ENCODE measurements at regions of chr11 and their contacts with region 1.

Region 1: DNA sequence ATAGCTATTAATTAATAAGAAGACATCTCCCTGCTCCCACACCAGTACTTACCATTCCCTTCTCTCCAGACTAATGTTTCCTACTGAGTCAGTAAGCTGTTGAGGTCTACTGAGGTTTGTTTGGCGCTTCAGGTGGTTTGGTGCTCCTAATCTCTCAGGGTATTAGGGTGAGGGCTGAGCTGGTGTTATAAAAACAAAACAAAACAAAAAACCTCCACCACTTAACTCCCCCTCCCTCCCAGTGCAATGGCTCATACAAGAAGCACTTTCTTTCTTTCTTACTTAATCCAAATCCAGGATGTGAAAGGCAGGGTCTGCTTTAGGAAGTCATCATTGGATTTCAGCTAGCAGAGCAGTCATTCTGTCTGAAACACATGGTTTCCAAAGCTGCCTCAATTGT is 15.3 kb downstream of the CSTPP1 start:
- DNase-seq: no peak
- ATAC-seq: no peak
- H3K4me3 ChIP-seq: no peak overlapping the region
- H3K27ac ChIP-seq: no peak overlapping the region
- H3K4me1 ChIP-seq: peaks cover 31% of the 10 kb centered on the region
- H3K27me3 ChIP-seq: no peaks in the 10 kb centered on the region
- CTCF ChIP-seq: no peak

Region 2: DNA sequence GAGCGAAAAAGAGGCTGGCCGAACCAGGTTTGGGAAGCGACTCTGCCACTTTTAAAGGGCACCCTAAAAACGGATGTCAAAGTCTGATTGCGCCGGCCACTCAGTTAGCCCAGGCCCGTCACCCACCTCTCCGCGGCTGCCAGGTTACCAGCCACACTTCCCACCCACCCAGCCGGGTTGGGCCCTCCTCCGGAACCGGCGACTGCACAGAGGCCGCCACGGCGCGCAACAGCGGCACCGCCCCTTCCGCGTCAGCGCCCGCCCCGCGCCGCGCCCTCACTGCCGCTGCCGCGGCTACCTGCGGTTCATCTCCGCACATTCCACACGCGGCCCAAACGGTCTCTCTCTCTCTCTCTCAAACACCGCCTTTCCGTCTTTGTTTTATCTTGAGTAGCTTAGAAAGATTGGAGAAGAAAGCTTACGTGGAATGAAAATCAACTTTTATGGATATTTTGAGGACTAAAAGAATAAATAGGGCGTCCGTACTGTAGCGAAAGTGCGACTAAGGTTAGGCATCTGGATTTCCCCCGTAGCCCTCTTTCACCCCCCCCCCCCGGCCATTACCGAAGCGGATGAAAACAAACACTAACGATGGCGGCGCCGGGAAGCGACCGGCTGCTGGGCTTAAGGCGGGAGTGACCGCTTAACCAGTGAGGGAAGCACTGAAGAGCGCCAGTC is 334.7 kb before region 1 on chr11 and contains the starts of genes ATG13 and HARBI1:
- CTCF ChIA-PET with region 1: no interaction called
- POLR2A ChIA-PET with region 1: no interaction called
- intact Hi-C with region 1: no loop called
- DNase-seq: peak; percentile 86
- ATAC-seq: peak; percentile 96
- H3K4me3 ChIP-seq: peak within 1 kb of the TSS; percentile 97
- H3K27ac ChIP-seq: peak within 1 kb of the TSS; percentile 78
- H3K4me1 ChIP-seq: peaks cover 15% of the 10 kb centered on the region
- H3K27me3 ChIP-seq: no peaks in the 10 kb centered on the region
- CTCF ChIP-seq: no peak
- total RNA-seq, gene ATG13: 95.0 and 97.3 TPM in 2 replicates
- total RNA-seq, gene HARBI1: 1.7 and 6.5 TPM in 2 replicates

Region 3: DNA sequence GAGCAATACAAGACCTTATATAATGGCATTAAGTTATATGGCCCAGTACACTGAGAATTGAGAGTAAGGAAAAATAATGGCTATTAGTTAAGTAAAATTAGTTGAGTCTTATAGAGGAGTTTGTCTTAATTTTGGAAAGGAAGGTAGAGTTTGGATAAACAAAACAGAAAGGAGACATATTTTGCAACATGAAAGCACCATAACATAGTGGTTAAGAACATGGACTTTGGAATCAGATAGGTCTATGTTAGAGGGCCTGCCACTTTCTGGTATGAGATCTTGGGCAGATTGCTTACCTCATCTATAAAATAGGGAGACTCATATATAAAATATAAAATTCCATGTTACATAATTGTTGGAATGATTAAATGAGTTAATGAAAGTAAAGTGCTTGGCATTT is 53.6 kb after region 1 on chr11:
- CTCF ChIA-PET with region 1: no interaction called
- POLR2A ChIA-PET with region 1: interaction called, 16 read pairs
- intact Hi-C with region 1: no loop called
- DNase-seq: no peak
- ATAC-seq: no peak
- H3K4me3 ChIP-seq: no peak overlapping the region
- H3K27ac ChIP-seq: no peak overlapping the region
- H3K4me1 ChIP-seq: no peaks in the 10 kb centered on the region
- H3K27me3 ChIP-seq: no peaks in the 10 kb centered on the region
- CTCF ChIP-seq: no peak